ENCODE measurements at regions of chr1 and their contacts with region 1.

Region 1: GRCh38 chr1:153253693-153254092 is 5.8 kb upstream of the LORICRIN start:
- DNase-seq: no peak
- ATAC-seq: peak; percentile 92
- H3K4me3 ChIP-seq: no peak overlapping the region
- H3K27ac ChIP-seq: no peak overlapping the region
- H3K4me1 ChIP-seq: no peaks in the 10 kb centered on the region
- H3K27me3 ChIP-seq: no peaks in the 10 kb centered on the region
- CTCF ChIP-seq: no peak
- EP300 ChIP-seq: no peak
- POLR2A ChIP-seq: no peak
- RAD21 ChIP-seq: no peak

Region 2: GRCh38 chr1:153238536-153238935 is 15.2 kb before region 1 on chr1:
- CTCF ChIA-PET with region 1: interaction called, 27 read pairs
- POLR2A ChIA-PET with region 1: interaction called, 5 read pairs
- RAD21 ChIA-PET with region 1: interaction called, 9 read pairs
- SMC1A ChIA-PET with region 1: interaction called, 42 read pairs
- in situ Hi-C with region 1: no loop called
- intact Hi-C with region 1: no loop called
- DNase-seq: no peak
- ATAC-seq: peak; percentile 68
- H3K4me3 ChIP-seq: no peak overlapping the region
- H3K27ac ChIP-seq: no peak overlapping the region
- H3K4me1 ChIP-seq: no peaks in the 10 kb centered on the region
- H3K27me3 ChIP-seq: no peaks in the 10 kb centered on the region; a peak in 2 of 4 replicates
- CTCF ChIP-seq: peak; percentile 24 to 42 (median 31); a peak in 5 of 6 replicates
- EP300 ChIP-seq: no peak
- POLR2A ChIP-seq: no peak
- RAD21 ChIP-seq: peak; percentile 36

Region 3: GRCh38 chr1:153415850-153416570 is 162.3 kb after region 1 on chr1 and contains the start of gene S100A7A:
- CTCF ChIA-PET with region 1: no interaction called
- POLR2A ChIA-PET with region 1: no interaction called
- RAD21 ChIA-PET with region 1: no interaction called
- SMC1A ChIA-PET with region 1: no interaction called
- in situ Hi-C with region 1: no loop called
- intact Hi-C with region 1: no loop called
- DNase-seq: no peak
- ATAC-seq: peak; percentile 33; the same call in 1 of the 3 replicates
- H3K4me3 ChIP-seq: no peak within 1 kb of the TSS
- H3K27ac ChIP-seq: no peak within 1 kb of the TSS
- H3K4me1 ChIP-seq: no peaks in the 10 kb centered on the region
- H3K27me3 ChIP-seq: no peaks in the 10 kb centered on the region
- CTCF ChIP-seq: no peak
- EP300 ChIP-seq: peak in 1 of 2 experiments; percentile 25; a peak in 1 of 4 replicates
- POLR2A ChIP-seq: no peak
- RAD21 ChIP-seq: no peak
- polyA plus RNA-seq, gene S100A7A: not detected